ENCODE measurements at regions of chr5 and their contacts with region 1.

Region 1: DNA sequence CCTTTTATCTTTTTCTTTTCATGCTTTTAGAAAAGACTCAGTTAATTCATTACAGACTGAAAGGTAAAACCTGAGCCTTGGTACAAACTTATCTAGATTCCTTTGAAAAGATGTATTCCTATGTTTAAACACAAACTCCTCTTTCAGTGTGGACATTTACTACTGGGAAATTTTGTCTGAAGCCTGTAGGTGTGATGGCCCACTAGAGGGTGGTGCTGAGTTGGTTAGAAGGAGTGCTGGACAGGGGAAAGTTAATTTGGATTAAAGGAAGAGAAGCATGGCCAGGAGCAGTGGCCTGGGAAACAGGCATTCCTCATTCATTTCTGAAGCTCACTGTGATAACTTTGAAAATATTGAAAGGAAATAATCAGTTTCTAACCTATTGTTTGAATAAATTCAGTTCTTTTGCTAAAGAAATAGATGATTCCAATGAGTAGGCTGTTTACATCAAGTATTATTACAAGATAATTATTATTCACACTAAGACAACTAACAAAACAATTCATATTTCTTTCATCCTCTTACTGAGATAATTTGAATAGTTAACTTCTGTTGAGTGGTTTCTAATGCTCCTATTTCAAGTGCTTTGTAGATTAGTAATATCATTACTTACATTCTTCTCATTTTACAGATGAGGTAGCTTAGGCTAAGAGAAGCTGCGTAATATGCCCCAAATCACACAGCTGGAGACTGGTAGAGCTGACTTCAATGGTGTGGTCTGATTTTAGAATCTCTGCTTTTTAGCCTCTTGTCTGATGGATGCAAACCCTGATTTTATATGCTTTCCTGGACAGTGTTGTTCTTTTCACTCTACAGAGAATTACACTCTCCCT is 150.9 kb downstream of the ADGRV1 start:
- DNase-seq: peak; percentile 63
- H3K27ac ChIP-seq: no peak overlapping the region
- CTCF ChIP-seq: peak; percentile 85

Region 2: DNA sequence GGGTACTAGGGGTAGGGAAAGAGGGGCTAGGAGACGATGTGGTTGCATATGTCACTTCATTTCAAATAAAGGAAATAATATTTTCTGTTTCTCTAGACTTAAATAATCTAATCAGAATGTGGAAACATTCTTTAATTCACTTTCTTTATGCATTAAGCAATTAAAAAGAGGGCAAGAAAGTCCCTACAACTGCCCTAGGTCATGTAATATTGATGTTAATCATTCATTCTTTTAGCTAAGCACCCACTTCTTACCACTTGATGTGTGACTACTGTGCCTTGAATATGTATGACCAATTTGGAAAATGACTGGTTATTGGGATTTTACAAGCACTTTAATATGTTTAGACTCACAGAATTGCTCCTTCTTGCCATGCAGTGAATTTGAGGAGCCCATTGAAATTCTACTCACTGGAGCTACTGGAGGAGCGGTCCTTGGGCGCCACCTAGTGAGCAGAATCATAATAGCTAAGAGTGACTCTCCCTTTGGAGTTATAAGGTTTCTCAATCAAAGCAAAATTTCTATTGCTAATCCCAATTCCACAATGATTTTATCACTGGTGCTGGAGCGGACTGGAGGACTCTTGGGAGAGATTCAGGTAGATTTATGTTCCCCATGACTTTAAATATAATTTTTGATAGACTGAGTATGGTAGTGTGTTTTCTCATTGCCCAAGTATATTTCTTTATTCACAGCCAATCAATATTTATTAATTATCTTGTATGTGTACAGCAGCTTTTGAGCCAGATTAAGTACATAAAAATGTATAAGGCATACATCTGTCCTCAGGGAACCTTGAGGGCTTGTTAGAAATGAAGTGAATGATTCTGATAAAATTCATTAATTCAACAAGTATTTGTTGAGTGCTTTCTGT is 74.2 kb after region 1 on chr5:
- CTCF ChIA-PET with region 1: interaction called, 24 read pairs
- POLR2A ChIA-PET with region 1: no interaction called
- DNase-seq: peak; percentile 43
- H3K27ac ChIP-seq: no peak overlapping the region
- CTCF ChIP-seq: peak; percentile 98

Region 3: DNA sequence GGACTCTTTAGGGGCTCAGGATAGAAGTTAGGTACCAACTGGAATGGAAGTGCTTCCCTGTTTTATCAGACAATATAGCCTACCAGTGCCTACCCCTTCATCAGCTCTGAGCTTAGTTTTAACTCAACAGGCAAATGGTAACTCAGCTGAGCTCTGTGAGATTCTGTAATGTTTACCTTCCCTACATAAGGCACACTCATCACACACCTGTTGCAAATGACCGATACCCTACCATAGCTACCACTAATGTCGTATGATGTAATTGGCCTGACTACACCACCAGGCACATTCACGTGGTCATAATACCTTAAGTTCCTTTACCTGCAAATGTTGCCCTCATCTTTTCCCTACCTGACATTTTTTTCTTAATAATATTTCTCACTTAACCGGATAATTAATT is 103.9 kb after region 1 on chr5:
- CTCF ChIA-PET with region 1: no interaction called
- POLR2A ChIA-PET with region 1: no interaction called
- DNase-seq: no peak
- H3K27ac ChIP-seq: no peak overlapping the region
- CTCF ChIP-seq: no peak

Region 4: DNA sequence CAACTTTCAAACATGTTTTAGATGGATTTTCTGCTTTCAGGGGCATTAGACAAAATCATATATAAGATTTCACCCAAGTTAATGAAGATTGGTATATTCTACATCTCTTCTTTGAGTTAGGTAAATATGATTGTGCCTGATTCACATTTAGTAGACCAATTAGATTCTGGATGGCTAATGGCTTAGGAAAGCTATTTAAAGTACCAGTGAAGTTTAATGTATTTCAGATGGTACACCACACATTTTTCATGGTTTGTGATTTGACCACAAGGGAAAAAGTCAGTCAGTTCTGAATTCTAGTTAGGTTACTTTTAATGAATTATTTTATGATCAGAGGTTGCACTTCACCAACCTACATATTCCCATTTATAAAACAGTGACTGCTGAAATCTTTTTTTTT is 258.8 kb after region 1 on chr5:
- CTCF ChIA-PET with region 1: no interaction called
- POLR2A ChIA-PET with region 1: no interaction called
- DNase-seq: no peak
- H3K27ac ChIP-seq: no peak overlapping the region
- CTCF ChIP-seq: no peak

Measured in RWPE1 (cell line).